Sigmoid colon (tissue), 7 donors: ENCODE measurements at regions of chr3 and their contacts with region 1.

Region 1: DNA sequence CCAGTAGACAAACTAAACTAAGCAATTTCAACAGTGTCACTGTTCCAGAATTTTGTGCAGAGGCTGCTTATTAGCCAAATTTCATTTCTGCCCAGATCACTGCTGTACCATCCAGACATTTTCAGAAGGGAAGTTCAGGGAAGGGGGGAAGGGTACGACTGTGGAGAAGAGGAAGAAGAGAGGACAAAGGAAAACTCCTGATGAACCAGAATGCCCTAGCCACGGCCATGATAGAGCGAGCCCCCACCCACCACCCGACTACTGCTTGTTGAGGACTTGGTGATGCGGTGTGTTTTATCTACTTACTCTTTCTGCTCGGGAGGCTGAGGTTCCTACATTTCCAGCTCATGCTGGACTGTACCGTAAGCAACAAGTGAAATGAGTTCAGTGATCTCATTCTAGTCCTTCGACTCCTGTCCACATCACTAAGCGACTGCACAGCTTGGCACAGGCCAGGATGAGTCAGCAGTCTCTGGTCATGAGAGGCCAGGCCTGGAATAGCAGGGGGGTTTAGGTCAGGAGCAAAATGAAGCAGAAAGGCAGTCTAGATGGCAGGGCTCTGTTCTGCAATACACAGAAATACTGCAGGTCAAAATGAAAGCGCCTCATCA is 330.8 kb downstream of the TIGIT start:
- DNase-seq: peak; percentile 98
- H3K4me3 ChIP-seq: peak overlapping the region; percentile 21 to 51 (median 44)
- H3K27ac ChIP-seq: peak overlapping the region; percentile 89 to 94 (median 93)
- H3K4me1 ChIP-seq: peaks cover 0 to 68% (median 52%) of the 10 kb centered on the region in 4 donors
- H3K27me3 ChIP-seq: no peaks in the 10 kb centered on the region
- CTCF ChIP-seq: no peak
- EP300 ChIP-seq: peak in 2 of 4 donors; percentile 51 to 80
- POLR2A ChIP-seq: peak in 1 of 2 donors; percentile 68

Region 2: DNA sequence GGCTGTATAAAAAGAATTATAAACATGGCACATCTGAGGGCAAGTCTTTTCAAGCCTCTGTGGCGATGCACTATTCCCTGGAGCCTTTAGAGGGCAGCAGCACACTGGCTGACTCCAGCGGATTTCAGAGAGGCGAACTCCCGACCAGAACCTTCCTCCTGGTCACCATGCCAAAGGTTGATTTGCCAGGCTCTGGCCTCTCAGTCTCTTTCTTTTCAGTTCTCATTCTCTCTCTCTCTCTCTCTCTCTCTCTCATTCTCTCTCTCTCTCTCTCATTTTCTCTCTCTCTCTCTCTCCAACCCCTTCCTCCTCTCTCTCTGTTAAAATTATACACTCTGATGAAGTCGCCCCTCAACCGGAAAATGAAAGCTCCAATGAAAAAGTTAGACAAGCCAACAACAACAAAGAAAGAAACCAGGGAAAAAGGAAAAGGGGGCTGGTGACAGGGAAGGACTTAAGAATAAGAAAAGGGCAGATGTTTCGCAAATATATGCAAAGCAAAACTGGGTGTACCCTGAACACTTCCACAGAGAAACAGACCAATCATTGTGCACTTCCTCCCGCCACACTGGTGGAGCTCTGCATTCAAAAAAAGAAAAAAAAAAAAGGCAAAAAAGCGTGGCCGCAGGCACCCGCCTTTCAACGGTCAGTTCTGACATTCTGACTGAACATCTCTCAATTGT is 240.7 kb before region 1 on chr3:
- intact Hi-C with region 1: loop called (anchors 5 kb)
- DNase-seq: peak; percentile 92
- H3K4me3 ChIP-seq: peak overlapping the region; percentile 28 to 47 (median 44)
- H3K27ac ChIP-seq: peak overlapping the region; percentile 74 to 80 (median 77)
- H3K4me1 ChIP-seq: peaks cover 0 to 44% (median 33%) of the 10 kb centered on the region in 4 donors
- H3K27me3 ChIP-seq: no peaks in the 10 kb centered on the region
- CTCF ChIP-seq: peak; percentile 73 to 93 (median 86)
- EP300 ChIP-seq: no peak
- POLR2A ChIP-seq: no peak

Region 3: GRCh38 chr3:114418724-114419543 is 205.7 kb before region 1 on chr3:
- intact Hi-C with region 1: loop called (anchors 5 kb)
- DNase-seq: no peak
- H3K4me3 ChIP-seq: no peak overlapping the region
- H3K27ac ChIP-seq: peak overlapping the region; percentile 23 to 70 (median 67)
- H3K4me1 ChIP-seq: peaks cover 0 to 34% (median 11%) of the 10 kb centered on the region in 4 donors
- H3K27me3 ChIP-seq: no peaks in the 10 kb centered on the region
- CTCF ChIP-seq: peak; percentile 81 to 95 (median 87)
- EP300 ChIP-seq: no peak
- POLR2A ChIP-seq: no peak

Region 4: GRCh38 chr3:114879059-114880031 is 254.7 kb after region 1 on chr3:
- intact Hi-C with region 1: loop called (anchors 10 kb)
- DNase-seq: no peak
- H3K4me3 ChIP-seq: no peak overlapping the region
- H3K27ac ChIP-seq: peak overlapping the region; percentile 4 to 56 (median 50)
- H3K4me1 ChIP-seq: peaks cover 0 to 50% (median 34%) of the 10 kb centered on the region in 4 donors
- H3K27me3 ChIP-seq: no peaks in the 10 kb centered on the region
- CTCF ChIP-seq: no peak
- EP300 ChIP-seq: no peak
- POLR2A ChIP-seq: no peak

Region 5: DNA sequence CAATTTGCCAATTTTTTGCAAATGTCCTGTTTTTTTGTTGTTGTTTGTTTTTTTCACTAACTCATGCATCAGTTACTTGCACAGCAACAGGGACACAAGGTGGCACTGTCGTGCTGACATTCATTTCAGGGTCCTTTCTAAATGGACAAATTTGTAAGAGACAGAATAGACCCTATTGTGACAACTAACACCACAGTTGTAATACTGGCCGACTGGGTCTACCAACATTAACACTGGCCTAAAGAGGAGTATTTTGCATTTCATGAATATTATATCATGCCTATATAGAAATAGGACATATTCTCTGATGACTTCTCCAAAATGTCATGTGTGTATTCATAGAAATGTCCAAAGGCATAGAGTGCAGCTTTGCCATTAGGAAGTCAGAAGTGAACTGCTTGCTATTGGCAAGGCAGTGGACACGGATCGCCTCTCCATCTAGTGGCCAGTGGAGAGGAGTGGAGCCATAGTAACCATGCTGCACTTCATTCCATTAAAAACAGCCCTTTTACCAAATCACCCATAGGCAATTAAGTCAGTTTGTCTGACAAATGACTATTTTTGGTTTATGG is 467.6 kb after region 1 on chr3:
- intact Hi-C with region 1: loop called (anchors 10 kb)
- DNase-seq: peak; percentile 84
- H3K4me3 ChIP-seq: no peak overlapping the region
- H3K27ac ChIP-seq: peak overlapping the region in 1 of 4 donors; percentile 27
- H3K4me1 ChIP-seq: peaks cover 0 to 44% (median 19%) of the 10 kb centered on the region in 4 donors
- H3K27me3 ChIP-seq: no peaks in the 10 kb centered on the region
- CTCF ChIP-seq: peak; percentile 65 to 84 (median 74)
- EP300 ChIP-seq: no peak
- POLR2A ChIP-seq: no peak

Region 6: GRCh38 chr3:115147329-115148141 is 522.9 kb after region 1 on chr3:
- intact Hi-C with region 1: loop called (anchors 2 kb)
- DNase-seq: peak; percentile 100
- H3K4me3 ChIP-seq: peak overlapping the region; percentile 84 to 94 (median 92)
- H3K27ac ChIP-seq: peak overlapping the region; percentile 98 to 99 (median 99)
- H3K4me1 ChIP-seq: peaks cover 0 to 29% (median 19%) of the 10 kb centered on the region in 4 donors
- H3K27me3 ChIP-seq: no peaks in the 10 kb centered on the region
- CTCF ChIP-seq: no peak
- EP300 ChIP-seq: peak in 1 of 4 donors; percentile 22
- POLR2A ChIP-seq: peak; percentile 76 to 87